ENCODE measurements at regions of chr10 and their contacts with region 1.

Region 1: DNA sequence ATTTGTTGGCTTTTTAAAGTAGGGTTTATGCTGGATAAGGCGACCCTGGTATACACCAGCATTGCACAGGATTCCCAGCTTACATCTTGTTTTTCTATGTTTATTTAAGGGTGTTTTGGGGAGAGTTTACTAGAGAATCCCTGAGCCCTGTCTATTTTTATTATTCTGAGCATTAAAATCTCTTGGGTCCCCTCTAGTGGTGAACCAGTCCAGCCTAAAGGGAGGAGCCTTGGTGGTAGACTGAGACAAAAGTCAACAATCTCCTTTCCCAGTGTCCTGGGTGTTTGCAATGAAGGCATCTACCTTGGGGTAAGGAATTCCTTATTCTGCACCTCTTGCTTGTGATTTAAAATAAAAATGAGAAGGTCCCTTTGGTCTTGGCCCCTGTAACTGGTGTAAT is 38.2 kb downstream of the ANTXRL start:
- DNase-seq: peak; percentile 14
- ATAC-seq: peak; percentile 79
- H3K4me3 ChIP-seq: no peak overlapping the region
- H3K27ac ChIP-seq: no peak overlapping the region
- H3K4me1 ChIP-seq: peaks cover 5% of the 10 kb centered on the region; the same call in 1 of the 2 replicates
- H3K27me3 ChIP-seq: peaks cover 3% of the 10 kb centered on the region; the same call in 1 of the 2 replicates
- CTCF ChIP-seq: peak; percentile 45
- POLR2A ChIP-seq: no peak
- RAD21 ChIP-seq: peak; percentile 43

Region 2: DNA sequence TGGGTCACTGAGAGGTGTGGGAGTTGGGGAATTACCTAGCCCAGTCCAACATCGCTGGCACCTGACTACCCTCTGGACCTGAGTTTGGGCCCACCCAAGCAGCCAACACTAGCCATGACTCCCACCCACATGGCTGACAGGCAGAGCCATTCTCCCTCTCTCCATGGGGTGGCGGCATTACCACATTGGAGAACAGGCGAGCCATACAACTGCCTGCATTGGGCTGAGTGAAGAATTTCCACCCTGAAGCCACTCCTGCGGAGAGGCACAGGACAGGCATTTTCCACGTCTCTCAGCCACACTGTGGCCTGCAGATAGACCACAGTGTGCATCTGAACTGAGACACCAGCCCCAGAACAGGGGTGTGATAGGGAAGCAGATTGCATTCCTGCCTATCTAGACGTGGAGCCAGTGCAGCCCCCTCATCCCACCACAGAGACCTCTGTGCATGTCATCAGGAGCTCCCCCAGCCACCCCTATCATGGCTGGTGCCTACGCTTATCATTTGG is 96.4 kb before region 1 on chr10:
- CTCF ChIA-PET with region 1: interaction called, 3 read pairs
- POLR2A ChIA-PET with region 1: no interaction called
- dilution Hi-C with region 1: no loop called
- in situ Hi-C with region 1: no loop called
- intact Hi-C with region 1: loop called (anchors 2 kb)
- DNase-seq: peak; percentile 70
- ATAC-seq: peak; percentile 99
- H3K4me3 ChIP-seq: no peak overlapping the region
- H3K27ac ChIP-seq: no peak overlapping the region
- H3K4me1 ChIP-seq: peaks cover 2% of the 10 kb centered on the region; the same call in 1 of the 2 replicates
- H3K27me3 ChIP-seq: peaks cover 7% of the 10 kb centered on the region
- CTCF ChIP-seq: peak; percentile 97
- POLR2A ChIP-seq: 0 out of 2 replicates have a peak, but pooled peaks have one; percentile 39
- RAD21 ChIP-seq: peak; percentile 100

Region 3: DNA sequence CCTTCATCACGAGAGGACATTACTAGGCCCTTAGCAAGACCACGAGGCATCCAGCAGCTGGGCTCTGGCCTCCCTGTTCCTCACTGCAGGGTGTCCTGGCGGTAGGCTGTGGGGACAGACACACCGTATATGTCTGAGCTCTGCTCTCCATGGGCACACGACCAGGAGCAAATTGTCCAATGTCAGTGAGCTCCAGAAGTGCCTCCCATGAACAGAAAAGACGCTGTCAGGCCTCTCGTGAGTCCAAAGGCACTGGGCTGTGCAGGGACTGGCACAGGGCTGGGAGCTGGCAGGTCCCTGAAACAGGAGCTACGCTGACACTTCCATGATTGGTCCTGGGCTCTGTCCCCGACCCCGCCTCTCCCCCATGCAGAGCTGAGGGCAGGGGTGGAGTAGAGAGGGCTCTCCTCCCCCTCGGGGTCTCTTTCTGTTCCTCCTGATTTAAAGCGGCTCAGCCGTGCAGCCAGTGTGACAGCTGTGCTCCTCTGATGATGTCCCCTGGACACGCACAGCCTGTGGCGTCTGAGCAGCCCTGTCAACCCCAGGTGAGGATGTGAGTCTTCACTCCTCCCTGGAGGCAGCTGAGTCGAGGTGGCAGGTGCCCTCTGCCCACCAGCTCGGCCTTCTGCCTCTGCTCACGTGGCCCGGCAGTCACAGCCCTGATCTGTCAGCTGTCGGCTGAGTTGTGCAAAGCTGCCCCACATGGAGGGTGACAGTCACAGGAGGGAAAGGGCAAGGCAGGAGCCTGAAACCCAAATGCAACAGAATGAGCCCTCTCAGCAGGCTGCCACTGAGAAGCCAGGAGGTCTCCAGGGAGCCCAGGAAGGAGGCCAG is 25.3 kb before region 1 on chr10:
- CTCF ChIA-PET with region 1: no interaction called
- POLR2A ChIA-PET with region 1: no interaction called
- dilution Hi-C with region 1: no loop called
- in situ Hi-C with region 1: no loop called
- intact Hi-C with region 1: no loop called
- DNase-seq: no peak
- ATAC-seq: no peak
- H3K4me3 ChIP-seq: no peak overlapping the region
- H3K27ac ChIP-seq: no peak overlapping the region
- H3K4me1 ChIP-seq: no peaks in the 10 kb centered on the region
- H3K27me3 ChIP-seq: no peaks in the 10 kb centered on the region; the same call in 1 of the 2 replicates
- CTCF ChIP-seq: no peak
- POLR2A ChIP-seq: no peak
- RAD21 ChIP-seq: no peak